ENCODE measurements at regions of chr14 and their contacts with region 1.

Region 1: DNA sequence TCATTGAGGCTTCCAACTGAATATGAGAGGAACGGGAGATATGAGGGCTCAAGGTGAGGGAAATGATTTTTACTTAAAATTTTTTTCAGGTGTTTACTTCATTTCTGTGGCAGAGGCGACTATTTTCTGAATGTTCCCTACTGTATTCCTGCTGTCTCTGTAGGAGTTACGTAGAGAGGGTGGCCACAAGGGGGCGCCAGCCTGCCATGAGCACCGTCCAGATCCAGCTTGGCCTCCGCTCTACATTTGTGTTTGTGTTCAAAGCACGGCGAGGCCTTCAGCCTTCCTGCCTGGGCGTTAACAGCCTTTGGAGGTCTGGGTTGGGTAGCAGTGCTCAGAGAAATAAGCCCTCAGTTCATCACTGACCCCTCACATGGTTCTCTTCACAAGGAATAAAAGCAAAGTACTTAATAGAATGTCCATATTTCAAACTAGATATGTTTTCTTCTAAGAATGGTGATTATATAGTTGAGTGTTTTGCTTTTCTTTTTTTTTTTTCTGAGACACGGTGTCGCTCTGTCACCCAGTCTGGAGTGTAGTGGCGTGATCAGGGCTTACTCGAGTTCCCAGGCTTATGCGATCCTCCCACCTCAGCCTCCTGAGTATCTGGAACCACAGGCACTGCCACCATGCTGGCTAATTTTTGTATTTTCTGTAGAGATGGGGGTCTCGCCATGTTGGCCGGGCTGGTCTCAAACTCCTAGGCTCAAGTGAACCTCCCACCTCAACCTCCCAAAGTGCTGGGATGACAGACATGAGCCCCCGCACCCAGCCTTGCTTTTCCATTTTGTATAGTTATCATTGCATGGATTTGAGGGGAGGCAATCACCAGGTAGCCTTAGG is 22.3 kb downstream of the CKB start:
- DNase-seq: peak; percentile 84
- H3K4me3 ChIP-seq: 0 out of 4 replicates have a peak overlapping the region, but pooled peaks of 1 of the 2 experiments have one; percentile 16
- H3K27ac ChIP-seq: no peak overlapping the region
- H3K4me1 ChIP-seq: peaks cover 0 to 6% of the 10 kb centered on the region in 2 experiments; a peak in 1 of 4 replicates
- H3K27me3 ChIP-seq: no peaks in the 10 kb centered on the region
- CTCF ChIP-seq: peak; percentile 97
- EP300 ChIP-seq: no peak
- RAD21 ChIP-seq: peak; percentile 78

Region 2: DNA sequence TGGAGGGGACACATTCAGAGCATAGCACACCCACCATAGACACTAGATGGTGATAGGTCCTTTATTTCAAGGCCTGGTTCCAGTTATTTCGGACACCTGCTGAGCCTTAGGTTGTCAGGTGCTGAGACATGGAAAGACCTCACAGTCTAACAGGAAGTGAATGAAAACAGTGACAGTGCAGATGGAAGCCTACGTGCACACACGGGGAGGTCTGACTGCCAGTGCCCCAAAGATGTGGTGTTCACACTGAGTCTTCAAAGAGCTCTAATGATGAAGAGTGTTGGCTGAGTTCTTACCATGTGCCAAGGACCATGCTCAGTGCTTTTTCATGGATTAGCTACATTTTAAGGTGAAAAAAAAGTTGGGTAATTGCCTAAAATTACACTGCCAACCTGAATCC is 24.3 kb before region 1 on chr14:
- CTCF ChIA-PET with region 1: interaction called, 15 read pairs
- POLR2A ChIA-PET with region 1: no interaction called
- DNase-seq: no peak
- H3K4me3 ChIP-seq: no peak overlapping the region
- H3K27ac ChIP-seq: no peak overlapping the region
- H3K4me1 ChIP-seq: no peaks in the 10 kb centered on the region
- H3K27me3 ChIP-seq: no peaks in the 10 kb centered on the region
- CTCF ChIP-seq: no peak
- EP300 ChIP-seq: no peak
- RAD21 ChIP-seq: no peak

Region 3: GRCh38 chr14:103488960-103489359 is 11.4 kb before region 1 on chr14:
- CTCF ChIA-PET with region 1: interaction called, 37 read pairs
- POLR2A ChIA-PET with region 1: no interaction called
- DNase-seq: no peak
- H3K4me3 ChIP-seq: no peak overlapping the region
- H3K27ac ChIP-seq: no peak overlapping the region
- H3K4me1 ChIP-seq: peaks cover 0 to 4% of the 10 kb centered on the region in 2 experiments; a peak in 1 of 4 replicates
- H3K27me3 ChIP-seq: no peaks in the 10 kb centered on the region
- CTCF ChIP-seq: no peak
- EP300 ChIP-seq: no peak
- RAD21 ChIP-seq: no peak

Region 4: GRCh38 chr14:103512701-103513611 is 12.6 kb after region 1 on chr14:
- CTCF ChIA-PET with region 1: interaction called, 69 read pairs
- POLR2A ChIA-PET with region 1: interaction called, 4 read pairs
- DNase-seq: no peak
- H3K4me3 ChIP-seq: no peak overlapping the region
- H3K27ac ChIP-seq: peak overlapping the region in 1 of 2 experiments; percentile 34; a peak in 1 of 4 replicates
- H3K4me1 ChIP-seq: peaks cover 3 to 10% of the 10 kb centered on the region in 2 experiments; a peak in 1 of 4 replicates
- H3K27me3 ChIP-seq: no peaks in the 10 kb centered on the region
- CTCF ChIP-seq: no peak
- EP300 ChIP-seq: no peak
- RAD21 ChIP-seq: no peak

Region 5: DNA sequence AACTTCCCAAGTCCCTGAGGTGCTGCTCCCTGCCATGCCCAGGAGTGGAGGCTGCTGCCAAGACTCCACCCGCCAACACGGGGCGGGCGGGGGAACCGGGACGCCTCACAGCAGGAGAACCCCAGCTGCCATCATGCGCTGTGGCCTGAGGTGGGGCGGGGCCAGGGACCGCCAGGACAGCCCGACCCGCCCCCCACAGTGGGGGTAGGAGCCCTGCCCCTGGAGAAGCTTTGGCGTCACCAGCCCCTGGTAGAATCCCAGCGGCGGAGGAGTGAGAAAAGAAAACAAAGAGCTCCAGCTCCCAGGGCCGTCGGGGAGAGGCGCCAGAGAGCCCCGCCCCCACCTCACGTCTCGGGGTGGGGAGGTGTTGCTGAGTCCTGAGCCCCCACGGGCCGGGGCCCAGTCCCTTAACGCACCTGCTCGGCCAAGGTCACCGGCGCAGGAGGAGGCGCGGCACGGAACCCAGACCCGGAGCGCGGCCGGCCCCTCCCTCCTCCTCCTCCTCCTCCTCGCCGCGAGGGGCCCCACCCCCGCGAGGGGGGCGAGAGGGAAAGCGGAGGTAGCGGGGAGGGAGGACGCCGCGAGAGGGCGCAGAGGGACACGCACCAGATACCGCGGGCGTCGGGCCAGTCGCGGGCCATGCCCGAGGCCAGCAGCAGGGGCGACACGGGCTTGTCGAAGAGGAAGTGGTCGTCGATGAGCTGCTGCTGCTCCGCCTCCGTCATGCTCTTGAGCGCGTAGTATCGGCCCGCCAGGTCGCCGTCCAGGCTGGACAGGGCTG is 20.5 kb after region 1 on chr14:
- CTCF ChIA-PET with region 1: interaction called, 69 read pairs
- POLR2A ChIA-PET with region 1: no interaction called
- DNase-seq: peak; percentile 92
- H3K4me3 ChIP-seq: peak overlapping the region; percentile 35 to 57; a peak in 3 of 4 replicates
- H3K27ac ChIP-seq: peak overlapping the region in 1 of 2 experiments; percentile 74; a peak in 2 of 4 replicates
- H3K4me1 ChIP-seq: peaks cover 0 to 20% of the 10 kb centered on the region in 2 experiments; a peak in 1 of 4 replicates
- H3K27me3 ChIP-seq: peaks cover 16% of the 10 kb centered on the region
- CTCF ChIP-seq: peak; percentile 41
- EP300 ChIP-seq: no peak
- RAD21 ChIP-seq: peak; percentile 36; the same call in 1 of the 2 replicates

Region 6: GRCh38 chr14:103528587-103529382 is 28.4 kb after region 1 on chr14 and contains the start of gene TRMT61A:
- CTCF ChIA-PET with region 1: interaction called, 10 read pairs
- POLR2A ChIA-PET with region 1: no interaction called
- DNase-seq: peak; percentile 99
- H3K4me3 ChIP-seq: peak within 1 kb of the TSS; percentile 94 to 99
- H3K27ac ChIP-seq: peak within 1 kb of the TSS; percentile 67 to 80
- H3K4me1 ChIP-seq: peaks cover 9 to 25% of the 10 kb centered on the region in 2 experiments; a peak in 1 of 4 replicates
- H3K27me3 ChIP-seq: no peaks in the 10 kb centered on the region
- CTCF ChIP-seq: no peak
- EP300 ChIP-seq: no peak
- RAD21 ChIP-seq: no peak
- polyA plus RNA-seq, gene TRMT61A: 15.8 and 18.1 TPM in 2 replicates

Region 7: DNA sequence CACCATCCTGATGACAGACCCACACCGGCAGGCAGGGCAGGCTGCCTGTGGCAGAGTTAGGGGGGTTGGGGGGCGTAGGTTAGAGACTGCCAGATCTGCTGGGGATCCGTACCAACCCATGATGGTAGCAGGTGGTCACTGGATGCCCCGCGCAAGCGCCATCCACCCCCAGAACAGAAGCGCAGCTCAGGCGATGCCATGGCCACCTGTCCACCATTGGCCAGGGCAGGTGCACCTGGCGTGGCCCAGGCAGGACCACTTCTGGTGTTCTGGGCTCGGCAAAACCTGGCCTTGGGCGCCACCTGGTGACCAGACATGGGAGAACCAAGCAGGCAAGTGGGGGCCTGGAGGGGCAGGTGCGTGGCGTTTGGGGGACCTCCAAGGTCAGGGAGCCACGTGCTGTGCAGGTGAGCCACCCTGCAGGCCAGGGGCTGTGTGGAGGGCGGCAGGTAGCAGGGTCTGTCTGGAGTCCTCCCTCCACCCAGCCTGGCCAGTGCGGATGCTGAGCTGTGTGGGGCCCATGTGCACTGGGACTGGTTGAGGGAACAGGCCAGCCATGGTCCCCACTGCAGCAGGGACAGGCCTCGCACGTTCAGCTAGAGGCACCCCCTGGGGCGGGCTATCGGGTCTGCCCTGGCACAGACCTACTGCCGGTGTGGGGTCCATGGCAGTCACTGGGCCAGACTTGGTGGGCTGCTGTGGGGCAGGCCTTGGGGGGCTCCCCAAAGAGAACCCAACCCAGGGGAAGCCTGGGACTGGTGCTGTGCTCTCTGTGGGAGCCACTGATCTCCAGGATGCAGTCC is 46.5 kb after region 1 on chr14:
- CTCF ChIA-PET with region 1: interaction called, 120 read pairs
- POLR2A ChIA-PET with region 1: no interaction called
- DNase-seq: peak; percentile 94
- H3K4me3 ChIP-seq: peak overlapping the region in 1 of 2 experiments; percentile 50; a peak in 1 of 4 replicates
- H3K27ac ChIP-seq: no peak overlapping the region
- H3K4me1 ChIP-seq: peaks cover 7 to 25% of the 10 kb centered on the region in 2 experiments; a peak in 3 of 4 replicates
- H3K27me3 ChIP-seq: no peaks in the 10 kb centered on the region
- CTCF ChIP-seq: peak; percentile 91
- EP300 ChIP-seq: no peak
- RAD21 ChIP-seq: peak; percentile 91

Region 8: DNA sequence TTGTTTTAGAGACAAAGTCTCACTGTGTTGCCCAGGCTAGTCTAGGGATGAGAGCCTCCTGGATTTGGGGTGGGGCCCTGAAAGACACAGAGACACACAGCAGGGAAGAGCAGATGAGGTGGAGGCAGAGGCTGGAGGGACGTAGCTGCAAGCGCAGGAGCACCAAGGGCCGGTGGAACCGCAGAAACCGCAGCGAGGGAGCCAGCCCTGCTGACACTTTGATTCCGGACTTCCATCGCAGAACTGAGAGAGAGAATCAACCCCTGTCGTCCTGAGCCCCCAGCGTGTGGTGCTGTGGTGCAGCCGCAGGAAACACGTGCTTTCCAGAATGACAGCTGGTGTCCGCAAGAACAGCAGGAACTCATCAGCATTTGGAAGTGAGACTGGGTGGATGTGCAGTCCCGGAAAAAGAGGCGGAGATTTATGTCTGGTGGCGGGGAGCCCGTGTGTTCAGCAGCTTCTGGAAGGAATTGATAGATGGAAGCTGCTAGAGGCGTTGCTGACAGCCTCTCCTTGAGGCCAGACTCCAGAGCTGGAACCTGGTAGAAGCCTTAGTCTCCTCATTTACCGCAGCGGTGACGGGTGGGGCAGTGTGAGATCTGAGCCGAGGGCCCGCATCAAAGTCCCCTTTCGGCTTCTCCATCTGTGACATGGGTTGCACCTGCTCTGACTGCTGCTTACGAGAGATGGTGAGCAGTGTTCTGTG is 106.7 kb after region 1 on chr14:
- CTCF ChIA-PET with region 1: no interaction called
- POLR2A ChIA-PET with region 1: no interaction called
- DNase-seq: peak; percentile 87
- H3K4me3 ChIP-seq: no peak overlapping the region
- H3K27ac ChIP-seq: no peak overlapping the region
- H3K4me1 ChIP-seq: peaks cover 10 to 11% of the 10 kb centered on the region in 2 experiments; a peak in 2 of 4 replicates
- H3K27me3 ChIP-seq: no peaks in the 10 kb centered on the region
- CTCF ChIP-seq: peak; percentile 42
- EP300 ChIP-seq: no peak
- RAD21 ChIP-seq: peak; percentile 54

Measured in SK-N-SH (cell line).